H1 (cell line): ENCODE measurements at regions of chr2 and their contacts with region 1.

Region 1: DNA sequence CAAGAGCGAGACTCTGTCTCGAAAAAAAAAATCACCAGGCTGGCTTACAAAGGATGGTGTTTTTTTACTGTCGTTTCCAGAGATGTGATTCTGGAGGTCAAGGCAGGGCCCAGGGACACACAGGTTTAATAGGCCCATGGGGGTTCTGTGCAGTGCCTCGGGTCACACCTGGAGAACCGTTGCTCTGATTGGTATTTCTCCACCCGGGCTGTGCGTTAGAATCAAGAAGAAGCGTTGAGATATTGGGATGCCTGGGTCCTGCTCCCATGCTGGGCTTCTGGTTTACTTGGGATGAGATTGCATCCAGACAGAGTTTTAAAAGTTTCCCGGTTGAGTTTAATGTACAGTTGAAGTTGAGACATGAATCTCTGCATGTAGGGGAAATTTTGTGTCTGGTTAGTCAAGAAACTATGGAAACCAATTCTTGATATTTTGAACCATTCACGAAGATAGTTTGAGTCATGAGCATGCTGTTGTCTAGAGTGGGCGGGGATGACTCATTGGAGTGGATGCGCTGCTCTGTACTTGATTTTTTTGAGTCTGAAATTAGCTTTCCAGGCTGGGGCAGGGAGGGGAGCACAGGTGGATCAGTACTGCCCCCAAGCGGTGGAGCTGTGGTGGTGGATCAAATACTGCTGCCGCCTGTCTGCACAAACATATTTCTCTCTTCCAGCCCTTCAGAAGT is 50.1 kb downstream of the GREB1 start:
- DNase-seq: peak in 1 of 2 experiments; percentile 82
- H3K4me3 ChIP-seq: no peak overlapping the region
- H3K27ac ChIP-seq: no peak overlapping the region
- H3K4me1 ChIP-seq: peaks cover 2 to 4% (median 2%) of the 10 kb centered on the region in 4 experiments; a peak in 5 of 7 replicates
- H3K27me3 ChIP-seq: no peaks in the 10 kb centered on the region
- CTCF ChIP-seq: peak; percentile 85 to 95 (median 95)
- EP300 ChIP-seq: no peak
- POLR2A ChIP-seq: no peak
- RAD21 ChIP-seq: peak; percentile 96 to 97

Region 2: DNA sequence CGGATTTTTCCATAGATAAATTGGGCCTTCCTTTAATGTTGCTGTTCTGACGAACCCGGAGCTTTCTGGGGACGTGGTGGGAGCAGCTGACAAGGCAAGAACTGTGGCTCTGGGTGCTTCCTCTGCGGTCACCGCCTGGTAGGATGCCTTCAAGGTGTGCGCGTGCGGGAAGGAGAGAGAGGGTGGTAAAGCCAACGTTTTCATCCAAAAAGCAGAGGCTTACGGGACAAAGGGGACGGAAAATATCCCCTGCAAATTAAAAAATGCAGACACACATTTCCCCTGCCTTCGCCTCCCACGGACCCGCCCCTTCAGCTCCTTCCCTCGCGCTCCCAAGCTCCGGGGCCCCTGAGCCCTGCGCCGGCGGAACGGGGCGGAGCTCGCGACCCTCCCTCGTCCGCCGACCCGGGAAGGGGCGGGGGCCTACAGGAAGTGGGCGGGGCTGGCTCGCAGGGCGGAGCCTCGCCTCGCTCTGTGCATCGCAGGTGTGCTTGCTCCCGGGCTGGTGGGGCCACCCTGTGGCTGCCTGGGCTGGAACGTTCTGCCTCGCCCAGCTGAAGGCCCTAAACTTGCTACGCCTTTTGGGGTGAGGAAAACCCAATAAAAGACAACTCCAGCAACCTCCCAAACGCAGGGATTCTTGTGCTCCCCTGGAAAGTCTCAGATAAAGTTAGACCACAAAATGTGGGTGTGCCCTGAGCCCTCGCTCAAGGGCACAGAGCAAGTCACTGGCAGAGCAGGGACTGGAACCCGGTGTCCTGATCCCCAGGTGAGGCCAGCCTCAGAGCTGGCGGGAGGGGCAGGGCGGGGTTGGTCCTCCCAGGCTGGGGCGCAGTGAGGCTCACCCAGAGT is 454.2 kb before region 1 on chr2:
- CTCF ChIA-PET with region 1: interaction called, 53 read pairs
- POLR2A ChIA-PET with region 1: no interaction called
- DNase-seq: peak; percentile 76 to 97
- H3K4me3 ChIP-seq: peak overlapping the region; percentile 32 to 56 (median 46); a peak in 7 of 8 replicates
- H3K27ac ChIP-seq: no peak overlapping the region
- H3K4me1 ChIP-seq: peaks cover 3 to 11% (median 6%) of the 10 kb centered on the region in 4 experiments
- H3K27me3 ChIP-seq: no peaks in the 10 kb centered on the region; a peak in 2 of 7 replicates
- CTCF ChIP-seq: peak; percentile 58 to 72 (median 67)
- EP300 ChIP-seq: peak in 1 of 2 experiments; percentile 54; a peak in 1 of 3 replicates
- POLR2A ChIP-seq: no peak
- RAD21 ChIP-seq: peak; percentile 74 to 80

Region 3: GRCh38 chr2:11465497-11466406 is 118.2 kb before region 1 on chr2 and contains the start of gene E2F6:
- CTCF ChIA-PET with region 1: interaction called, 52 read pairs
- POLR2A ChIA-PET with region 1: no interaction called
- DNase-seq: peak; percentile 73 to 98
- H3K4me3 ChIP-seq: peak within 1 kb of the TSS; percentile 23 to 53 (median 38); a peak in 7 of 8 replicates
- H3K27ac ChIP-seq: no peak within 1 kb of the TSS
- H3K4me1 ChIP-seq: 0 out of 7 replicates have a peak, but pooled peaks cover 0 to 2% (median 0%) of the 10 kb centered on the region in 4 experiments
- H3K27me3 ChIP-seq: peaks cover 0 to 10% (median 4%) of the 10 kb centered on the region in 4 experiments; a peak in 5 of 7 replicates
- CTCF ChIP-seq: no peak
- EP300 ChIP-seq: peak in 1 of 2 experiments; percentile 73; a peak in 1 of 3 replicates
- POLR2A ChIP-seq: peak in 1 of 2 experiments; percentile 43; a peak in 2 of 3 replicates
- RAD21 ChIP-seq: peak in 1 of 2 experiments; percentile 4; a peak in 1 of 4 replicates
- total RNA-seq, gene E2F6: 14.9 and 15.6 TPM in 2 replicates

Region 4: GRCh38 chr2:11505652-11506610 is 78.1 kb before region 1 on chr2:
- CTCF ChIA-PET with region 1: interaction called, 24 read pairs
- POLR2A ChIA-PET with region 1: no interaction called
- DNase-seq: no peak
- H3K4me3 ChIP-seq: no peak overlapping the region
- H3K27ac ChIP-seq: no peak overlapping the region
- H3K4me1 ChIP-seq: peaks cover 0 to 1% (median 0%) of the 10 kb centered on the region in 4 experiments; a peak in 1 of 7 replicates
- H3K27me3 ChIP-seq: no peaks in the 10 kb centered on the region
- CTCF ChIP-seq: no peak
- EP300 ChIP-seq: no peak
- POLR2A ChIP-seq: no peak
- RAD21 ChIP-seq: no peak

Region 5: DNA sequence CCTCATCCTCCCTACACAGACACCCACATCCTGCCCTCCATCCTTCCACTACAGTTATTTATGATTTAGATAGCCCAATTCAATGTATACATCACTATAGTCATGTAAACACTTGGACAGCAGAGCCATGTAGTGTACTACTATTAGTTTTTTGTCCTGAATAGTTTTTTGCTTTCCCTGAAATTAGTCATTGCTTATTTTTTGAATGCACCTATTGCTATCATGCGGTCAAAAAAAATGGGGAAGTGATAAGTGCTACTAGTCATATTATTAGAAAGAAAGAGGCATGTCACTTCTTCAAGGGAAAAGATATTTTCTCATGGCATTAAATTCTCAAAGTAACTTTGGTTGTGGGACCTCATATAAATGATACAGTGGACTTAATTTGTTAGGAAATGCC is 57.0 kb before region 1 on chr2:
- CTCF ChIA-PET with region 1: interaction called, 377 read pairs
- POLR2A ChIA-PET with region 1: no interaction called
- DNase-seq: no peak
- H3K4me3 ChIP-seq: no peak overlapping the region
- H3K27ac ChIP-seq: no peak overlapping the region
- H3K4me1 ChIP-seq: peaks cover 0 to 7% (median 3%) of the 10 kb centered on the region in 4 experiments; a peak in 1 of 7 replicates
- H3K27me3 ChIP-seq: no peaks in the 10 kb centered on the region
- CTCF ChIP-seq: no peak
- EP300 ChIP-seq: no peak
- POLR2A ChIP-seq: no peak
- RAD21 ChIP-seq: no peak

Region 6: DNA sequence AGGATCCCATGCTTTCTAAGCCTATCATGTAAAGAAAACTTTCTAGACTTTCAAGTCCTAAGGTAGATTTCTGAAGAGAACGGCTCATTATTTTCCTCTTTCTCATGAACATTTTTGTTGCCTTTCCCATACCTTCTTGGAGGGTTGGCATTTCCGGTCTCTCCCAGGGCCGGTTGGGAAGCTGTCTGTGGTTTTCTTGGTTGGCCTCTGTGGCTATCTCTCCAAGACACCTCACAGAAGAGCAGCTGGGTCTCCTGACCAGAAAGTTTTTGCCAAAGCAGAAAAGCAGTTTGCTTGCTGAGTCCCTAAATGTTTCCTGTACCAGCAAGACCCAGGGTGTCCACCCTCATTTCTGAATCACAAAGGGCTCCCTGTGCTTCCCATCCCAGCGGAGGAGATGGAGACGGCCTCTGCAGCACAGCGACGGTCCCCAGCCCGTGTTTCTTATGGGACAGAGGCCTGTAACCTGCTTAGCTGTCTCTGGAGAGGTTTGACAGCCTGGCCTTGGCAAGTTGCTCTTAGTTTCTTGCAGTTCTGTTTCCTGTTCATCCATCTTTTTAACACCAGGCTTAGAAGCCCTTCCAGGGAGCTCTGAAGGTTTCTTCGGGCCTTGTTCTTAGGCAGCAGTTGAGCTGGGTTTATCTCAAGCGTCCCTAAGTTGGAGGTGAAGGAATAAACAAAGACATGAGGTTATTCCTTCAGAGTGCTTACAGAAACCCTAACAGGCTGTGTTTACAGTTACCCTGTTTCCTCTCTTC is 10.4 kb before region 1 on chr2:
- CTCF ChIA-PET with region 1: interaction called, 275 read pairs
- POLR2A ChIA-PET with region 1: interaction called, 3 read pairs
- DNase-seq: no peak
- H3K4me3 ChIP-seq: no peak overlapping the region
- H3K27ac ChIP-seq: no peak overlapping the region
- H3K4me1 ChIP-seq: peaks cover 3 to 13% (median 11%) of the 10 kb centered on the region in 4 experiments
- H3K27me3 ChIP-seq: no peaks in the 10 kb centered on the region
- CTCF ChIP-seq: no peak
- EP300 ChIP-seq: no peak
- POLR2A ChIP-seq: no peak
- RAD21 ChIP-seq: no peak

Region 7: DNA sequence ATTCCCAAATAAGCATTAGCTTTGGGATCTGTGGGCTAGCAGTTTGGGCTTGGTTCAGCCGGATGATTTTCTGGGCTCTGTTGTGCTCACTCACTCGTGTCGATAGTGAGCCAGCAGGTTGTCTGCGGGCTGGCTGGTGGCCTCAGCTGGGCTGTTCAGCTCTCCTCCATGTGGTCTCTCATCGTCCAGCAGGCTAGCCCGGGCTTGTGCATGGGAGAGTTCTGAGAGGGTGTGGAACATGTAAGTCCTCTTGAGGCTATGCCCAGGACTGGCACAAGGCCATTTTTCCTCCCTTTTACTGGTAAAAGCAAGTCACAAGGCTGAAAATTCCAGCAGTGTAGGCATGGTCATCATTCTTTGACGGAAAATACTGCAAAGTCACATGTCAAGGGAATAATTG is 47.5 kb after region 1 on chr2:
- CTCF ChIA-PET with region 1: interaction called, 18 read pairs
- POLR2A ChIA-PET with region 1: no interaction called
- DNase-seq: no peak
- H3K4me3 ChIP-seq: no peak overlapping the region
- H3K27ac ChIP-seq: no peak overlapping the region
- H3K4me1 ChIP-seq: no peaks in the 10 kb centered on the region
- H3K27me3 ChIP-seq: no peaks in the 10 kb centered on the region
- CTCF ChIP-seq: no peak
- EP300 ChIP-seq: no peak
- POLR2A ChIP-seq: no peak
- RAD21 ChIP-seq: no peak